ENCODE measurements at regions of chr16 and their contacts with region 1.

Region 1: GRCh38 chr16:19907161-19907992 is 22.7 kb upstream of the GPRC5B start:
- DNase-seq: peak; percentile 67 to 74
- ATAC-seq: peak; percentile 97 to 99
- H3K4me3 ChIP-seq: no peak overlapping the region
- H3K27ac ChIP-seq: no peak overlapping the region
- H3K4me1 ChIP-seq: no peaks in the 10 kb centered on the region
- CTCF ChIP-seq: peak; percentile 95
- EP300 ChIP-seq: no peak
- POLR2A ChIP-seq: no peak
- RAD21 ChIP-seq: peak; percentile 93 to 95

Region 2: DNA sequence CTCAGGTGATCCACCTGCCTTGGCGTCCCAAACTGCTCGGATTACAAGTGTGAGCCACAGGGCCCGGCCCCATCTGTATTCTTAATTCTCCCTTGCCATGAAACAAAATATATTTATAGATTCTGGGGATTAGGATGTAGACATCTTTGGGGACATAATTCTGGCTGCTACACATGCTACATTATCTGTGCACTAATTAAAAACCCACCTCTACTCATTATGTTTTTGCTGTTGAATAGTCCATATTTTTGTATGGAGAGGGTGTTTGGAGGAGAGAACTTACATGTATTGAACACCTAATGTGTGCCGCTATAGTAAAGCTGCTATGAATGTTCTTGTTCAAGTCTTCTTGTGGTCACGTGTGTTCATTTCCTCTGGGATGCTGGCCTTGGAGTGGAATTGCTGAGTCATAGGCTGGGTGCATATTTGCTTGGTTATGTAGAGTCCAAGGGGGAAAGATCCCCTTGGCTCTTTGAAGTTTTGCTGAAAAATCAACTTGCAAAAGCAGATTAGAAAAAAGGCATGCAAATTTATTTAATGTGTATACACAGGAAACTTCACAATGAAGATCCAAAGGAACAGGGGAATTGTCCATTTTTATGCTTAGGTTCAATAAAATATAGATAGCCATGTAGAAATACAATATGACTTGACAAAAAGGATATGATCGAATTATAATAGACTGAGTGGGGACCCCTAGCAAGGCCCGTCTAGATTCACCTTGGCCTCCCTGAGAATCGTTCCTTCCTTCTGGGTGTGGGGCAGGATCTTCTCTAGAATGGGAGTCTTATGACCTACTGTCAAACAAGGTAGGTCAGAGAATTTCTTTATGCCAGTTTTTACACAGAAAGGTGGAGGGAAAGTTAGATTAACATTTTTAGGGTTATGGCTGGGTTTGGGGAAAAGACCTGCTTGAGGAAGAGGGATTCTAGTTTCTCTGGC is 19.3 kb after region 1 on chr16:
- CTCF ChIA-PET with region 1: interaction called, 13 read pairs
- POLR2A ChIA-PET with region 1: no interaction called
- DNase-seq: peak in 1 of 2 experiments; percentile 65
- ATAC-seq: peak in 1 of 2 experiments; percentile 42; a peak in 1 of 6 replicates
- H3K4me3 ChIP-seq: no peak overlapping the region
- H3K27ac ChIP-seq: peak overlapping the region; percentile 30 to 71; a peak in 5 of 6 replicates
- H3K4me1 ChIP-seq: peaks cover 9% of the 10 kb centered on the region
- CTCF ChIP-seq: no peak
- EP300 ChIP-seq: no peak
- POLR2A ChIP-seq: no peak
- RAD21 ChIP-seq: no peak

Region 3: GRCh38 chr16:19948186-19949104 is 41.1 kb after region 1 on chr16:
- CTCF ChIA-PET with region 1: interaction called, 19 read pairs
- POLR2A ChIA-PET with region 1: no interaction called
- DNase-seq: peak in 1 of 2 experiments; percentile 19
- ATAC-seq: peak in 1 of 2 experiments; percentile 38; a peak in 1 of 6 replicates
- H3K4me3 ChIP-seq: no peak overlapping the region
- H3K27ac ChIP-seq: no peak overlapping the region
- H3K4me1 ChIP-seq: no peaks in the 10 kb centered on the region
- CTCF ChIP-seq: no peak
- EP300 ChIP-seq: no peak
- POLR2A ChIP-seq: no peak
- RAD21 ChIP-seq: no peak

Region 4: GRCh38 chr16:20225228-20225739 is 317.9 kb after region 1 on chr16:
- CTCF ChIA-PET with region 1: no interaction called
- POLR2A ChIA-PET with region 1: no interaction called
- DNase-seq: no peak
- ATAC-seq: no peak
- H3K4me3 ChIP-seq: no peak overlapping the region
- H3K27ac ChIP-seq: no peak overlapping the region
- H3K4me1 ChIP-seq: no peaks in the 10 kb centered on the region
- CTCF ChIP-seq: no peak
- EP300 ChIP-seq: no peak
- POLR2A ChIP-seq: no peak
- RAD21 ChIP-seq: no peak

Region 5: DNA sequence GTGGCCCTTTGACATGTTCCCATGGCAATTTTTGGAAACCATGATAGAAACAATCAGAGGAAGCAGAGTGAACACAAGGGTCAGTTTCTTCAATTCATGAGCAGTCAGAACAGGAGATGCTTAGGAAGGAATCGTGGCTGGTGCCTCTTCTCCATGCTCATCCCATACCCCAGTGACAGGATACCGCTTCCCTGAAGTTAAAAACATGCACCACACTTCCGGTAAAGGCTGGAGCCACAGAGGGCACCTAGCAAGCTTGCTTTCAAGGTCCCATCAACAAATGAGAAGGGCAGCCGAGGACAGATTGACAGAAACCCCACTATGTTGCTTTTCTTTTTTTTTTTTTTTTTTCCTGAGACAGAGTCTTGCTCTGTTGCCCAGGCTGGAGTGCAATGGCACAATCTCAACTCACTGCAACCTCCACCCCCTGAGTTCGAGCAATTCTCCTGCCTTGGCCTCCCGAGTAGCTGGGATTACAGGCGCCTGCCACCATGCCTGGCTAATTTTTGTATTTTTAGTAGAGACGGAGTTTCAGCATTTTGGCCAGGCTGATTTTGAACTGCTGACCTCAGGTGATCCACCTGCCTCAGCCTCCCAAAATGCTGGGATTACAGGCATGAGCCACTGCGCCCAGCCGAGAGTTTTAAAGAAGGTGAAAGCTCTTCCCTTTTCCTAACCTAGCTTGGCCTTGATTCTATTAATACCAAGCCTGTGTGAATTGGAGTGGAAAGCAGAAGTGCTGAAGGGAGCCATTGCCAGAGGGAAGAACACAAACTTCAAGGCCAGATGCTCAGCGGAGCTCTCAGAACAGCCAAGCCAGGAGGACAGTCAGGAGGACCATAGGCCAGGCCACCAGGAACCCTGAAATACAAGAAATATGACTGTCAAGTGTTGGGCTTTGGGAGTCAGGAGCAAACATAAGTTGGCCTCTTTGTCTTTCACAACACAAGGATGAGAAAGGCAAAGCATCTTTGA is 403.3 kb after region 1 on chr16:
- CTCF ChIA-PET with region 1: interaction called, 18 read pairs
- POLR2A ChIA-PET with region 1: no interaction called
- DNase-seq: no peak
- ATAC-seq: no peak
- H3K4me3 ChIP-seq: no peak overlapping the region
- H3K27ac ChIP-seq: no peak overlapping the region
- H3K4me1 ChIP-seq: no peaks in the 10 kb centered on the region
- CTCF ChIP-seq: no peak
- EP300 ChIP-seq: no peak
- POLR2A ChIP-seq: no peak
- RAD21 ChIP-seq: no peak

Region 6: DNA sequence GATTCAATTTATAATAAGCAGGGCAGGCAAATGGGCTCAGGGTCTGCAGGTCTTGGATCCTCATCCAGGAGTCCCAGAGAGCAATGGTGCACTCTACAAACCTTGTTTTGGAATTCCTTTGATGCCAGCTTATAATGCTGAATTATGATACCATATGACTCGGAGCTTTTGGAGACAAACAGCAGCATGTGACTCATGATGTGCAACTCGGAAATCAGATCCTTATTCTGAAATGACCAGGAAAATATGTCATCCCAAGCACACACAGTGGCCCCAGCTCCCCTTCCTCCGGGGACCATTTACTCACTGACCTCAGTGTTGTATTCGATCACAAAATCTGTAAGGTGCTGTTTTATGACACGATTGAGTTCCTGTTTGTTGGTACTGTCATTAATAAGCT is 465.3 kb after region 1 on chr16:
- CTCF ChIA-PET with region 1: interaction called, 29 read pairs
- POLR2A ChIA-PET with region 1: no interaction called
- DNase-seq: no peak
- ATAC-seq: no peak
- H3K4me3 ChIP-seq: no peak overlapping the region
- H3K27ac ChIP-seq: no peak overlapping the region
- H3K4me1 ChIP-seq: no peaks in the 10 kb centered on the region
- CTCF ChIP-seq: no peak
- EP300 ChIP-seq: no peak
- POLR2A ChIP-seq: no peak
- RAD21 ChIP-seq: no peak

Region 7: DNA sequence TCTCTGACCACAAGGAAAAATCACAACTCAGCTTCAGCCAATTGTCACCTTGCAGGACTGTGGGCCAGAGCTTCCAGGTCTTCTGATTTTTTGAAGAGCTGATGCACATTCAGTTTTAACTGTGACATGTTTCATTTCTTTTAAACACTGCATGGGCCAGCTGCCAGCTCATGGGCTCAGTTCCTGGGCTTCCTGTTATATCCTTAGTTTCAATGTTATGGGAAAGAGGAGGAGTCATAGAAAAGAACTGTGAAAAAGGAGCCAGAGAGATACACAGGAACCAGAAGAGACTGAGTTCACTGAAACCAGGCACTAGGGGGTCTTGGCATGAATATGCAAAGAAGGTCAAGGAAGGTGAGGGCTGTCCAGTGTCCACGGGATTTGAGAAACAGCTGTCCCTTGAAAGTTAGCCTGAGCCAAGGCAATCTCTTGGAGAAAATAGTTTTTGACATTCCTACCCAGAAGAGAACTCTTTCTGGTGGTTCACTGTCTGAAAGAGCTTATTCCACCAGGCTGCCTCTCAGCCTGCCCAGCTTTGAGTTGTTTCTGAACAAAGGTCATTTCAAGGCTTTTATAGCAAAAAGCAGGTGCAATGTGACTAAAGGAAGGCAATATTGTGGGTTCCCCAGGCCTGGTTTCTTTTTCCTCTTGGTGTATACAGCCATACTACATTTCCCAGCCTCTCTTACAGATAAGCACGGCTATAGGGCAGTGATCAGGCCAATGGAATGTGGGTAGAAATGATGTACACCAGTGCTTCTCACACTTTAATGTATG is 486.6 kb after region 1 on chr16:
- CTCF ChIA-PET with region 1: interaction called, 374 read pairs
- POLR2A ChIA-PET with region 1: no interaction called
- DNase-seq: no peak
- ATAC-seq: no peak
- H3K4me3 ChIP-seq: no peak overlapping the region
- H3K27ac ChIP-seq: no peak overlapping the region
- H3K4me1 ChIP-seq: no peaks in the 10 kb centered on the region
- CTCF ChIP-seq: no peak
- EP300 ChIP-seq: no peak
- POLR2A ChIP-seq: no peak
- RAD21 ChIP-seq: no peak

Measured in A549 (cell line).